ENCODE measurements at regions of chr14 and their contacts with region 1.

Region 1: GRCh38 chr14:102437997-102438915 is 71.3 kb downstream of the ANKRD9 start:
- DNase-seq: peak; percentile 70
- ATAC-seq: peak; percentile 84
- H3K4me3 Mint-ChIP-seq: no peak overlapping the region
- H3K27ac Mint-ChIP-seq: no peak overlapping the region
- H3K4me1 Mint-ChIP-seq: no peaks in the 10 kb centered on the region
- H3K27me3 Mint-ChIP-seq: no peaks in the 10 kb centered on the region
- CTCF ChIP-seq: peak; percentile 89

Region 2: GRCh38 chr14:102451061-102451350 is 12.8 kb after region 1 on chr14:
- CTCF ChIA-PET with region 1: interaction called, 26 read pairs
- POLR2A ChIA-PET with region 1: no interaction called
- intact Hi-C with region 1: no loop called
- DNase-seq: no peak
- ATAC-seq: no peak
- H3K4me3 Mint-ChIP-seq: no peak overlapping the region
- H3K27ac Mint-ChIP-seq: no peak overlapping the region
- H3K4me1 Mint-ChIP-seq: no peaks in the 10 kb centered on the region
- H3K27me3 Mint-ChIP-seq: no peaks in the 10 kb centered on the region
- CTCF ChIP-seq: no peak

Region 3: GRCh38 chr14:102500158-102500662 is 62.0 kb after region 1 on chr14:
- CTCF ChIA-PET with region 1: interaction called, 19 read pairs
- POLR2A ChIA-PET with region 1: no interaction called
- intact Hi-C with region 1: no loop called
- DNase-seq: peak; percentile 33
- ATAC-seq: no peak
- H3K4me3 Mint-ChIP-seq: no peak overlapping the region
- H3K27ac Mint-ChIP-seq: peak overlapping the region; percentile 59
- H3K4me1 Mint-ChIP-seq: peaks cover 9% of the 10 kb centered on the region
- H3K27me3 Mint-ChIP-seq: no peaks in the 10 kb centered on the region
- CTCF ChIP-seq: no peak

Region 4: DNA sequence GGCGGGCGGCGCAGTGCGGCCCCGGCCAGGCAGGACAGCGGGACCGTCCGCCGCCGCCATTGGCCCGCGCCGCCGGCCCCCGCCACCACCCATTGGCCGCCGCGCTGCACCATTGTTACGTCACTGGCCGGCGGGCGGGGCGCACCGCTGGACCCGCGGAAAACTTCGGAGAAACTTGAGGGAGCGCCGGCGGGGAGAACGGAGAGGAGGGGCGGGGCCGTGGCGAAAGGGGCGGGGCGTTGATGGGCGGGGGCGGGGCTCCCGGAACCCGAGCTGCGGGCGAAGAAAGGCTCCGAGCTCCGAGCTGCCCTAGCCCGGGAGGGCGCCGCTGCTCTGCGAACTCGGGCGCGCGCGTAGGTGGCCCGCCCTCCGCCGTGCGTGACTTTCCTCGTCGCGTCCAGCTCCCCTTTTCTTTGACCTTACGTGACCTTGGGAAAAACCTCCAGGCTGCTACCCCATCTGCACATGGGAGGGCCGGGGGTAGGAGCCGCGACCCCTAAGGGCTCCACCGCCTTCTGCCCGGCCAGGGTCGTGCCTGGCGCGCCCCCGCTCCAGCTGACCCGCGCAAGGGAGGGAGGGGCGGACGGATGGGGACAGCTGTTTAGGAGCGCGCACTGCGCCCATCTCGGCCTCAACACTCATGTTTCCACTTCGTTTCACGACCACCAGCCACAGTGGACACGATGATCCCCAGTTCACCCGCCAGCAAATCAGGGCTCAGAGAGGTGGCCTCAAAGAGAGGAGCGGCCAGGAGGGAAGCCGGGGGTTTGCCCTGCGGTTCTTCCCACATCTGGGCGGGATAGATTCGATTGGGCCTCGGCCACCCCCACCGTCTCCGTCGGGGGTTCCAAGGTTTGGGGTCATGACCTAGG is 71.7 kb after region 1 on chr14 and contains the start of gene ANKRD9:
- CTCF ChIA-PET with region 1: interaction called, 21 read pairs
- POLR2A ChIA-PET with region 1: no interaction called
- intact Hi-C with region 1: no loop called
- DNase-seq: peak; percentile 94
- ATAC-seq: peak; percentile 91
- H3K4me3 Mint-ChIP-seq: peak within 1 kb of the TSS; percentile 80
- H3K27ac Mint-ChIP-seq: peak within 1 kb of the TSS; percentile 30
- H3K4me1 Mint-ChIP-seq: peaks cover 12% of the 10 kb centered on the region
- H3K27me3 Mint-ChIP-seq: no peaks in the 10 kb centered on the region
- CTCF ChIP-seq: no peak
- total RNA-seq, gene ANKRD9: 15.0 to 16.9 TPM

Region 5: GRCh38 chr14:102516531-102517415 is 78.5 kb after region 1 on chr14:
- CTCF ChIA-PET with region 1: interaction called, 31 read pairs
- POLR2A ChIA-PET with region 1: no interaction called
- intact Hi-C with region 1: loop called (anchors 1 kb)
- DNase-seq: peak; percentile 56
- ATAC-seq: peak; percentile 85
- H3K4me3 Mint-ChIP-seq: peak overlapping the region; percentile 70
- H3K27ac Mint-ChIP-seq: no peak overlapping the region
- H3K4me1 Mint-ChIP-seq: peaks cover 3% of the 10 kb centered on the region
- H3K27me3 Mint-ChIP-seq: no peaks in the 10 kb centered on the region
- CTCF ChIP-seq: peak; percentile 99

Region 6: GRCh38 chr14:102524466-102525218 is 86.4 kb after region 1 on chr14:
- CTCF ChIA-PET with region 1: interaction called, 31 read pairs
- POLR2A ChIA-PET with region 1: no interaction called
- intact Hi-C with region 1: no loop called
- DNase-seq: peak; percentile 98
- ATAC-seq: peak; percentile 98
- H3K4me3 Mint-ChIP-seq: peak overlapping the region; percentile 79
- H3K27ac Mint-ChIP-seq: peak overlapping the region; percentile 75
- H3K4me1 Mint-ChIP-seq: peaks cover 28% of the 10 kb centered on the region
- H3K27me3 Mint-ChIP-seq: no peaks in the 10 kb centered on the region
- CTCF ChIP-seq: peak; percentile 93

Region 7: GRCh38 chr14:102608064-102608446 is 169.8 kb after region 1 on chr14:
- CTCF ChIA-PET with region 1: no interaction called
- POLR2A ChIA-PET with region 1: no interaction called
- intact Hi-C with region 1: no loop called
- DNase-seq: no peak
- ATAC-seq: no peak
- H3K4me3 Mint-ChIP-seq: no peak overlapping the region
- H3K27ac Mint-ChIP-seq: no peak overlapping the region
- H3K4me1 Mint-ChIP-seq: peaks cover 33% of the 10 kb centered on the region
- H3K27me3 Mint-ChIP-seq: no peaks in the 10 kb centered on the region
- CTCF ChIP-seq: no peak

Region 8: DNA sequence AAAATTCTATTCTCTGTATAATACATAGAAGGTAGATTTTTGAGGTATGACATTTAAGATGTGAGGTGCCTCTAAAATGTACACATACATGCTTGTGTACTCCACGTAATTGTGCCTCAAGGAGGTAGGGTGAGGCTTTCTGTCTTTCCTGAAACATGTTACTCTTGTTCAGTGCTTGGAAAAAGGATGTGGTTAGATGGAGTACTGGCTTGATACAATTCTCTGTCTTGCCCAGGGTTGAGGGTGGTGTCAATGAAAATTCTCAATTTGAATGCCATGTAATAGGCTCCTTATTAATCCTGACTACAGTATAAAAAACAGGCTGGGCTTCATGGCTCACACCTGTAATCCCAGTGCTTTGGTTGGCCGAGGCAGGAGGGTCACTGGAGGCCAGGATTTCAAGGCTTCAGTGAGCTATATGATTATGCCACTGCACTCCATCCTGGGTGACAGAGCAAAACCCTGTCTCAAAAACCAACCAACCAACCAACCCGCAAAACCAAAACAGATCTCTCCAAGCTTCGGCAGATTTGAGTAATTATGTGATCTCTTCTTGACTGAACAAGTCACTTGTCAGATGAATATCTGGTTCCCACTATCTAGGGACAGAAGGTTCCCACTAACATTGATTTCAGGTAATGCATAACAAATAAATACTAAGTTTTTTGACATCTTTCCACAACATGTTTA is 195.8 kb after region 1 on chr14:
- CTCF ChIA-PET with region 1: no interaction called
- POLR2A ChIA-PET with region 1: no interaction called
- intact Hi-C with region 1: no loop called
- DNase-seq: no peak
- ATAC-seq: no peak
- H3K4me3 Mint-ChIP-seq: no peak overlapping the region
- H3K27ac Mint-ChIP-seq: no peak overlapping the region
- H3K4me1 Mint-ChIP-seq: peaks cover 14% of the 10 kb centered on the region
- H3K27me3 Mint-ChIP-seq: no peaks in the 10 kb centered on the region
- CTCF ChIP-seq: no peak

Measured in activated CD8-positive, alpha-beta T cell treated with anti-CD3 and anti-CD28 coated beads for 36 hours (primary cell).